Adrenal gland (tissue), 19 donors: ENCODE measurements at regions of chr4 and their contacts with region 1.

Region 1: GRCh38 chr4:21184788-21185187 is 484.5 kb downstream of the PACRGL start:
- DNase-seq: no peak
- H3K4me3 ChIP-seq: no peak overlapping the region
- H3K27ac ChIP-seq: no peak overlapping the region
- H3K4me1 ChIP-seq: no peaks in the 10 kb centered on the region
- H3K27me3 ChIP-seq: no peaks in the 10 kb centered on the region
- CTCF ChIP-seq: peak in 5 of 6 experiments; percentile 15 to 43 (median 38)
- POLR2A ChIP-seq: no peak

Region 2: DNA sequence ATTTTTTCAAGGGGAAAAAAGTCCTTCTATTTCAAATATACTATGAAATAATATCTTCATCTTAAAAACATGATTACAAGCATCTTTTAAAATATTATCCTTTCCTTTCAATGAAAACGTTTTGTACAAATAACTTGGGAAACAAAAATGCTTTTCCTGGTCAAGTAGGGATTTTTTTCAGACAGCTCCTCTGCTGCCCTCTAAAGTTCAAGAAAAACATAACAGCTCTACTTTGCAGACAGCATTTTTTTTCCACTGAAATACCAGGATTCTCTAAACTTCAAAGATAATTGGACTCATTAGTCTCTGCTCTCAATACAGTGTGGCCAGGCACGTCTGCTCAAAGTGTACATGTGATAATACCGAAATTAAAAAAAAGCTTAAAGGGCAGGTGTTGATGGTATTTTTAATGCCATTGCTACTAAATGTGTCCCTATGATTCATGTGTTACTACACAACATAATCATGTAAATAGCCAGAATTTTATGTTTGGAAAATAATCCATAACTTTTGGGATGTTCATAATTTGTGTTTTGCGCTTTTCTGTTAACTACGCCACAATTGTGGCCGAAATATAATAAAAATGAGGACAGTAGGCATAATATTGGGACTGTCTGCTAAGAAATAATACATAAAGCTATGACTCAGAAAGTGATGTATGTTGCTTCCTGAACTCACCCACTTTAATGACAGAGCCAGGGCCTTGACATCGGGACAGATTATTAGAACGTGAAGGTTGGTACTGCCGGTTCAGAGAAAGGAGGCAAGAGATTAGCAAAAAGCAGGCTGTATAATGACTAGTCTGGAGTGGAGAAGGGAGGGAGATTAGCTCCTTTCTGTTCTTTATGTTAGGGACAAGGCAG is 284.9 kb after region 1 on chr4:
- intact Hi-C with region 1: loop called in 1 of 2 experiments (anchors 10 kb)
- DNase-seq: no peak
- H3K4me3 ChIP-seq: no peak overlapping the region
- H3K27ac ChIP-seq: no peak overlapping the region
- H3K4me1 ChIP-seq: no peaks in the 10 kb centered on the region
- H3K27me3 ChIP-seq: peaks cover 3% of the 10 kb centered on the region
- CTCF ChIP-seq: peak; percentile 43 to 66 (median 60)
- POLR2A ChIP-seq: no peak